Activated CD4-positive, alpha-beta T cell treated with anti-CD3 and anti-CD28 coated beads, Interleukin-2, amount 10 ng/mL, durations not matched to agents 24 days and 14 days (primary cell): ENCODE measurements at regions of chr15 and their contacts with region 1.

Region 1: DNA sequence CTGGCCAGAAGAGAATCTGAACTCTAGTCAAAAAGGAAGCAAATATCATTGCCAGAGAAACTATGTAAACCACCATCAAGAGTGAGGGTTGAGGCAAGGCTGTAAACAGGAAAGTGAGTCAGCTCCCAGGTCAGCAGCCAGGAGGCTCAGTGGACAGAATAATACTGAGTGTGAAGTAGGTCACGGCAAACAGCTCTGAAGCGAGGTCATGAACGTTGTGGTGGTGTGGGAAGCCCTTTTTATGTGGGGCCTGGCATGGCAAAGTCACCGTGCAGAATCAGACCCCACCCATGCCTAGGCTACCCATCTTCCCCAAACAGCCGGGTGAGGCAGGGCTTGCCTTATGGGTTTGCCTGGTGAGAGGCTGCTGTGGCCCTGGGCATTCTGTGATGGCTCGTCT is 43.9 kb downstream of the THBS1 start:
- DNase-seq: peak; percentile 90
- H3K4me3 Mint-ChIP-seq: peak overlapping the region; percentile 76
- H3K27ac Mint-ChIP-seq: peak overlapping the region; percentile 99
- H3K4me1 Mint-ChIP-seq: peaks cover 76% of the 10 kb centered on the region
- H3K27me3 Mint-ChIP-seq: no peaks in the 10 kb centered on the region

Region 2: GRCh38 chr15:38554354-38554753 is 1070.5 kb before region 1 on chr15:
- intact Hi-C with region 1: loop called (anchors 10 kb)
- DNase-seq: peak; percentile 75
- H3K4me3 Mint-ChIP-seq: peak overlapping the region; percentile 60
- H3K27ac Mint-ChIP-seq: peak overlapping the region; percentile 89
- H3K4me1 Mint-ChIP-seq: peaks cover 83% of the 10 kb centered on the region
- H3K27me3 Mint-ChIP-seq: no peaks in the 10 kb centered on the region

Region 3: DNA sequence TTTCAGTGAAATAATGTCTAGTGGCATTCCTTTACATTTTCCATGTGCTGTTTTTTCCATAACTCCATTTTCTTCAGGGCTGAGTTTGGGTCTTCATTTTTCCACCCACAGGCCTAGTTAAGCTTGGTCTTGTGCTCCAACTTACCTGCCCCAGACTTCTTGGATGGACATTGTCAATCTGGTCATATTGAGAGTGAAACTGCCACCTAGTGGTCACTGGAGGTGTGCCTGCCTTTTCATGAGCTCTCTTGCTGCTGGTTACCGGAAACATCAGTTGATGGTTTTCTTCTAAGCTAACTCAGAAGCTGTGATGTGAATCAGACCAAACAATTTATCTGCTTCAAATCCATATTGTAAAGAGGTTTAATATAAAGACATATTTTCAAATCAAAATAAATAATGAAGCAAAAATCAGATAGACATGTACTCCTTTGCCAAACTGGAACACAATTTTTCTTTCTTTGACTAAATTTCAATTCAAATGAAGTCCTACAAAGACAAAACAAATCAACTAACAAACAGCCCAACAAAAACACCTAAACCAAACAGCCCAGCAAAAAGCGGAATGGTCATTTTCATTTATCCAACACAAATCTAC is 925.1 kb before region 1 on chr15:
- intact Hi-C with region 1: loop called (anchors 5 kb)
- DNase-seq: peak; percentile 92
- H3K4me3 Mint-ChIP-seq: no peak overlapping the region
- H3K27ac Mint-ChIP-seq: peak overlapping the region; percentile 65
- H3K4me1 Mint-ChIP-seq: peaks cover 57% of the 10 kb centered on the region
- H3K27me3 Mint-ChIP-seq: no peaks in the 10 kb centered on the region

Region 4: DNA sequence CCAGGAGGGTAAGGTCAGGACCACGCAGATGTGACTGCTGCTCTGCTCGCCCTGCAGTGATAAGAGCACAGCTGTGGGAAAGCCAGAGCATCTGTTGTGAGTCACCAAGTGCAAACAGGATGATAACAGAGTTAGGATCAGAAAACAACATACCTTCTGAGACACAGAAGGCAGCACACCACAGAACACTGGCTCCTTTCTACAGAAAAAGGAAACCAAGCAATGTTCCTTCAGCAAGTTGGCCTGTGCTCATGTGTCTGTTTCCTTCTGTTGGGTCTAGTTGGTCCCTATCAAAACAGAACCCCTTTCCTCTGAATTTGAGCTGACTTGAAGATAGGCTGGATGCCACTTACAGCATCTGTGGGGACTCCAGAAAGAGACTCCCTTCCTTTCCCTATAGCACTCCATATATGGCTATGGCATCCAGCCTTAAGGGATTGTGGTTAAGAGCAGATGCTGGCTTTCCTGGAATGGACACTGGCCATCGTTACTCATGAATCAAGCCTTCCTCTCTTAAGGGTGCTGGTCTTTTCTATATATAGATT is 484.7 kb before region 1 on chr15:
- intact Hi-C with region 1: loop called (anchors 2 kb)
- DNase-seq: peak; percentile 75
- H3K4me3 Mint-ChIP-seq: no peak overlapping the region
- H3K27ac Mint-ChIP-seq: peak overlapping the region; percentile 84
- H3K4me1 Mint-ChIP-seq: peaks cover 44% of the 10 kb centered on the region
- H3K27me3 Mint-ChIP-seq: no peaks in the 10 kb centered on the region

Region 5: GRCh38 chr15:39643727-39644126 is 18.9 kb after region 1 on chr15:
- intact Hi-C with region 1: loop called (anchors 1 kb)
- DNase-seq: no peak
- H3K4me3 Mint-ChIP-seq: no peak overlapping the region
- H3K27ac Mint-ChIP-seq: no peak overlapping the region
- H3K4me1 Mint-ChIP-seq: peaks cover 23% of the 10 kb centered on the region
- H3K27me3 Mint-ChIP-seq: peaks cover 6% of the 10 kb centered on the region

Region 6: GRCh38 chr15:41102854-41103253 is 1478.0 kb after region 1 on chr15:
- intact Hi-C with region 1: no loop called
- DNase-seq: no peak
- H3K4me3 Mint-ChIP-seq: no peak overlapping the region
- H3K27ac Mint-ChIP-seq: no peak overlapping the region
- H3K4me1 Mint-ChIP-seq: peaks cover 3% of the 10 kb centered on the region
- H3K27me3 Mint-ChIP-seq: no peaks in the 10 kb centered on the region